Activated CD8-positive, alpha-beta T cell treated with anti-CD3 and anti-CD28 coated beads, Interleukin-2, amount 10 ng/mL, durations not matched to agents 7 days and 5 days (primary cell): ENCODE measurements at regions of chr21 and their contacts with region 1.

Region 1: DNA sequence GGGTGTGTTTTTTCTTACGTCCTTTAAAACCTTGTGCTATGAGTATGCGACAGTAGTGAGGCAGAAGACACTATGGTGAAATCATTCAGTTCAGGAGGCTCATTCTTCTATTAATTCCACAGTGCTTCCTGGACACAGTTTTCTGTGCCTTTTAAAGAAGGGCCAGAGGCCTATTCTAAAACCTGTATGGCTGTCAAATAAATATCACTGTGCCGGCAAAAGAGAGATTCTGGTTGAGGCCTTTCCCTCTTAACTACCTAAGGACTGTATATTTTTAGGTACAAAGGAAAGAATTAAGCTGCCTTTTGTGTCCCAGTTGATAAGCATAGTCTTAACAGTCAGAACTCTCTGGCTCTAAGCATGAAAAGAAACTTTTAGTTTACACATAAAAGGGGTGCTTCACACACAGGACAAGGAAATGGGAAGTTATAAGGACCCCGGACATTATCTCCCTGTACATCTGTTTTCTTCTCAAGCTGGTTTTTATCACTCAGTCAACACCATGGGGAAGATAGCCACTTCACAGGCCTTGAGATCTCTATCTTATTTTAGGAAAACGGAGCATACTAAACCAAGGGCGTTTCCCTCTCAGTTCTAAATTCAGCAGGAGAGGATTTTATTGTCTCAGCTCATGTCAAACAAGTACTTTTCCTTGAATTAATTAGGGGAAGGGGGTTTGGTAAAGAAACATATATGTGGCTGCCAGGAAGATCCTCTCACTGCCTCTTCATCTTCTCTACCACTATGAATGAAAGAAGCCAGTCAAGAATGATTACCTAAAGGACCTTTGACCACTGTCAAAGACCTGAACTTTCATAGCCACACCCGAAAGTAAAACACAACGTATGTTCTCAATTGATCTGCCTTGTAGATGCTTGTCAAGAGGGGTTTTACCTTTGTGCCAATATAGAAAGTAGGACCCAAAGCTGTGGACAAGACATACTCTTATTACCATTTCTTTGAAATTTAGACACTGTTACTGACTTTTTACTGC is 71.4 kb upstream of the HSPA13 start:
- DNase-seq: no peak
- ATAC-seq: peak; percentile 39
- H3K4me3 Mint-ChIP-seq: peak overlapping the region; percentile 31
- H3K27ac Mint-ChIP-seq: peak overlapping the region; percentile 82
- H3K4me1 Mint-ChIP-seq: peaks cover 56% of the 10 kb centered on the region
- H3K27me3 Mint-ChIP-seq: no peaks in the 10 kb centered on the region

Region 2: DNA sequence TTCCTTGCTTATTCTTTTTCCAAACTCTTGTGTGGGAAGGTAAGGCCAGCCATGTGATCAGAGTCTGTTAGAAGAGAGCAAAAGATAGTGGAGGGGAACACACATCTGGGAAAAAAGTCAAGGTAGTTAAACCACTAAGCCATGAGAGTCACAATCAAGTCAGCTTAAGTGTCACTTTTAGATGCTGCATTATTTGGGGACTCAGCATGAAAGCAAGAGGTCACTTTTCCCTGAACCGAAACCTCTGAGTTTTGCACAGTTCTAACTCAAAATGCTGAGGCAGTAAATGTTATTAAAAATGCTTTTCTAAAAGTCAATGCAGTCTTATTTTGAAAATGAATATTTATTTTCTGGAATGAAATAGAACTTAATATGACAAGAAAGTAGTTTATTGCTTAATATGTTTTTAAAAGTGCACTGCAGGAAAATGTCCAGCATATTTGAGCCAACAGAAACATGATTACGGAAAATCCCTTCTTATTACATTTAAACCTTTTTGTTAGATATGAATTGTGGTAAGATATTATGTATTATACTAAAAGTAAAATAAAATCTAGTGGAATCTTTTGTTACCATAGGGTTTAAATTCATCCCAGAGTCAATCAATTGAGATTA is 169.1 kb before region 1 on chr21:
- CTCF ChIA-PET with region 1: no interaction called
- POLR2A ChIA-PET with region 1: no interaction called
- DNase-seq: no peak
- ATAC-seq: no peak
- H3K4me3 Mint-ChIP-seq: no peak overlapping the region
- H3K27ac Mint-ChIP-seq: no peak overlapping the region
- H3K4me1 Mint-ChIP-seq: no peaks in the 10 kb centered on the region
- H3K27me3 Mint-ChIP-seq: peaks cover 11% of the 10 kb centered on the region

Region 3: GRCh38 chr21:14382835-14383594 is 71.3 kb before region 1 on chr21 and contains the start of gene HSPA13:
- CTCF ChIA-PET with region 1: no interaction called
- POLR2A ChIA-PET with region 1: interaction called, 11 read pairs
- DNase-seq: peak; percentile 100
- ATAC-seq: peak; percentile 98
- H3K4me3 Mint-ChIP-seq: peak within 1 kb of the TSS; percentile 99
- H3K27ac Mint-ChIP-seq: peak within 1 kb of the TSS; percentile 98
- H3K4me1 Mint-ChIP-seq: peaks cover 39% of the 10 kb centered on the region
- H3K27me3 Mint-ChIP-seq: peaks cover 2% of the 10 kb centered on the region
- total RNA-seq, gene HSPA13: 26.0 to 30.4 TPM

Region 4: DNA sequence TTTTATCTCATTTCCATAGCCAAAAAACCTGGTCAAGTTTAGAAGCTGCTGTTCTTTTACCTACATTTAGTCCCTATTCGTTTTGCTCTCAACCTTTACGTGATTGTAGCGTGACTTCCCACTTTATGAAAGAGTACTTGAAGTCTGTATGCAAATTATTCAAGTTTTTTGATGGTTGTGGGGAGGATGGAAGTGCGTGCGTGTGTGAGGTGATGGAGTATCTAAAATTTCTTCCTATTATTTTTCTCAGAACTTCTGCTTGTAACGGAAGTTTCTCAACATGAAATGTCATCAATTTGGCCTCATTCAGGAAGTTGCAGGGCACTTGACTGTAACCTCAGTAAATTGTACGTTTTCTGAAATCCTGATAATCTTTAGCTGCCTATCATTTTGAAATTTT is 27.9 kb after region 1 on chr21:
- CTCF ChIA-PET with region 1: interaction called, 6 read pairs
- POLR2A ChIA-PET with region 1: interaction called, 20 read pairs
- DNase-seq: peak; percentile 67
- ATAC-seq: peak; percentile 88
- H3K4me3 Mint-ChIP-seq: peak overlapping the region; percentile 53
- H3K27ac Mint-ChIP-seq: peak overlapping the region; percentile 92
- H3K4me1 Mint-ChIP-seq: peaks cover 74% of the 10 kb centered on the region
- H3K27me3 Mint-ChIP-seq: no peaks in the 10 kb centered on the region

Region 5: GRCh38 chr21:14901482-14901958 is 447.2 kb after region 1 on chr21:
- CTCF ChIA-PET with region 1: no interaction called
- POLR2A ChIA-PET with region 1: no interaction called
- DNase-seq: no peak
- ATAC-seq: no peak
- H3K4me3 Mint-ChIP-seq: no peak overlapping the region
- H3K27ac Mint-ChIP-seq: no peak overlapping the region
- H3K4me1 Mint-ChIP-seq: peaks cover 9% of the 10 kb centered on the region
- H3K27me3 Mint-ChIP-seq: no peaks in the 10 kb centered on the region